ENCODE measurements at regions of chr4 and their contacts with region 1.

Region 1: DNA sequence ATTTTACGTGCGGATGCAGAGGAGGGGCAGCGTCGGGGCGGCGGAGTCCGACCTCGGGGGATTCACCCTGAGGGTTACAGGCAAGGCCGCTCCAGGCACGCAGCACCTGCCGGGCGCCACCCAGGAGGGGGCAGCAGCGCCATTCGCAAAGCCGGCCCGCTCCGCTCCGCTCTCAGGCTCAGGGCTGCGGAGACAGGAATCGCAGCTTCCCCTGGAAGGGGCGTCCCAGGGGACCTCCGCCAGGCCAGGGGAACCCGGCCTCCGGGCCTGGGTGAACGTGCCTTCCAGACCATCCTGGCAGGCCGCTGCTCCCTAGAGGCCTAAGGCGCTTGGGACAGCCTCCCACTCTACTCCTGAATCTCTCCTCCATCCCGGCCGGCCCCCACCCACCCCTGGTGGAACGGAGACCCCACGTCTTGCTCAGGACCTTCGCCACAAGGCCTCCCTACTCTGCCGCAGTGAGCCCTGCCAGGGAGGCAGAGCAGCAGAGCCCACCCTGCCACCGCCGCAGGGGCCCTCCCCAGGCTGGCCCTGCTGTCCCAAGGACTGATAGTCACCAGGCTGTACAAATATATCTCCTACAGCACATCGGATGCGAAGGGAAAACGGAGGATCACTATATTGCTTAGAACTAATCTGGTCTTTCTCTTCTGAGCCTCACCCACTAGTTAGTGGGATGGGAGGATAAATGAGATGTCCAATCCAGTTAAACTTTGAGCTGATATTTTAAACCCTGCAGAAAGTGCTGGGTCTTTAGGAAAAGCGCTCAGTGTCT is 115.0 kb downstream of the SMIM20 start:
- DNase-seq: peak; percentile 78
- H3K4me3 Mint-ChIP-seq: peak overlapping the region; percentile 65
- H3K27ac Mint-ChIP-seq: no peak overlapping the region
- H3K4me1 Mint-ChIP-seq: no peaks in the 10 kb centered on the region
- H3K27me3 Mint-ChIP-seq: peaks cover 26% of the 10 kb centered on the region
- CTCF ChIP-seq: peak; percentile 56

Region 2: GRCh38 chr4:25694466-25694865 is 334.5 kb before region 1 on chr4:
- CTCF ChIA-PET with region 1: no interaction called
- intact Hi-C with region 1: no loop called
- DNase-seq: no peak
- H3K4me3 Mint-ChIP-seq: no peak overlapping the region
- H3K27ac Mint-ChIP-seq: no peak overlapping the region
- H3K4me1 Mint-ChIP-seq: peaks cover 20% of the 10 kb centered on the region
- H3K27me3 Mint-ChIP-seq: no peaks in the 10 kb centered on the region
- CTCF ChIP-seq: no peak

Region 3: DNA sequence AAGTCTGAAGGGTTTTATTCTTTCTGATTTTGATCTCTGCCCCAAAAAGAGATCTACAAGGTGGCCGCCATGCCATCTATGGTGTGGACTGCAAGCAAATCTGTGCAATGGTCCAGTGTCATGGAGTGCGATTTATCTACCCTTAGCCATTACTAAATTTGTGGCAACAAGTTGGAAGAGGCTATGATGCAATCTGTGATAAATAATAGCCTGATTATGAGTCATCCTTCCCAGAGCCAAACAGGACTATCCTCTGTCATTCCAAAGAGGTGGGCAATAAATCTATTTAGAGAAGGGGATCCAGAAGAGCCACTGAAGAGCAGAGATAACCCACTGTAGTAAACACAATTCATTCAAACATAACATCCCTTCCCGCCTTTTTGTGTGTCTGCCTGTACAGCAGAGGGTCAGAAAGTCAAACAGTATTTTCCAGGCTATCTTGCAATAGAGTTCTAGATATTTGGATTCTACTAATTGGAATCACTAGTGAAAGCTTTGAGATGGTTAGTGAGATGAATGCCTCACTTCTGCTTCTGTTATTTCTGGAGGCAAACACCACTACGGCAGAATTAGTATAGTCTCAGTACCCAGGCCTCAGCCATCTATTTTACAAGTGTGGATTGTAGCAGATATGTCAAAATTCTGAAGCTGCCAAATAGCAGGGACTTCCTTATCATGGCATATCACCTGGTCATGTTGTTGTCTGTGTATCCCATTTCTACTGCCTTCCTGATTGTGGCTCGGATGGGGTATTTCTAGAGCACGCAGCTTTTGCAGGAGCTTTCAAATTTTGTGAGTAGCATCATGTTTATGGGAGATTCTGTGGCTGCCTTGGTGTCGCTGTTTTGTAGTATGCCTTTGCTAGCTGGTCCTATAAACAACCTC is 77.1 kb after region 1 on chr4:
- CTCF ChIA-PET with region 1: no interaction called
- intact Hi-C with region 1: no loop called
- DNase-seq: no peak
- H3K4me3 Mint-ChIP-seq: no peak overlapping the region
- H3K27ac Mint-ChIP-seq: peak overlapping the region; percentile 67
- H3K4me1 Mint-ChIP-seq: peaks cover 9% of the 10 kb centered on the region
- H3K27me3 Mint-ChIP-seq: no peaks in the 10 kb centered on the region
- CTCF ChIP-seq: no peak

Region 4: GRCh38 chr4:26325191-26325590 is 296.2 kb after region 1 on chr4:
- CTCF ChIA-PET with region 1: interaction called, 3 read pairs
- intact Hi-C with region 1: loop called (anchors 2 kb)
- DNase-seq: peak; percentile 9
- H3K4me3 Mint-ChIP-seq: no peak overlapping the region
- H3K27ac Mint-ChIP-seq: peak overlapping the region; percentile 55
- H3K4me1 Mint-ChIP-seq: peaks cover 11% of the 10 kb centered on the region
- H3K27me3 Mint-ChIP-seq: no peaks in the 10 kb centered on the region
- CTCF ChIP-seq: no peak

Region 5: DNA sequence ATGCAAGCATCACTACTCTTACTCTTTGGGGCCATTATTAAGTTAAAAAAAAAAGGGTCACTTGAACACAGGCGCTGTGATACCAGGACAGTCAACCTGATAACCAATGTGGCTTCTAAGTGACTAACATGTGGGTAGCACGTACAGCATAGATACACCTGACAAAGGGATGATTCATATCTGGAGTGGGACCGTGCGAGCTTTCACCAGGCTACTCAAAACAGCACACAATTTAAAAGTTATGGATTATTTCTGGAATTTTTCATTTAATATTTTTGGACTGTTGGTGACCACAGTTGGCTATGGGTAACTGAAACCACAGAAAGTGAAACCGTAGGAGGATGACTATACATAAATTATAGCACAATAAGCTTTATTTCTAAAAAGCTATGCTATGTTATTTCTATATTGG is 717.8 kb after region 1 on chr4:
- CTCF ChIA-PET with region 1: no interaction called
- intact Hi-C with region 1: no loop called
- DNase-seq: no peak
- H3K4me3 Mint-ChIP-seq: no peak overlapping the region
- H3K27ac Mint-ChIP-seq: no peak overlapping the region
- H3K4me1 Mint-ChIP-seq: no peaks in the 10 kb centered on the region
- H3K27me3 Mint-ChIP-seq: no peaks in the 10 kb centered on the region
- CTCF ChIP-seq: no peak